Motor neuron (in vitro differentiated cells): ENCODE measurements at regions of chrX and their contacts with region 1.

Region 1: GRCh38 chrX:43836435-43837184 is 45.6 kb downstream of the MAOB start:
- ATAC-seq: no peak
- H3K4me3 ChIP-seq: no peak overlapping the region
- H3K27ac ChIP-seq: no peak overlapping the region
- H3K4me1 ChIP-seq: no peaks in the 10 kb centered on the region

Region 2: DNA sequence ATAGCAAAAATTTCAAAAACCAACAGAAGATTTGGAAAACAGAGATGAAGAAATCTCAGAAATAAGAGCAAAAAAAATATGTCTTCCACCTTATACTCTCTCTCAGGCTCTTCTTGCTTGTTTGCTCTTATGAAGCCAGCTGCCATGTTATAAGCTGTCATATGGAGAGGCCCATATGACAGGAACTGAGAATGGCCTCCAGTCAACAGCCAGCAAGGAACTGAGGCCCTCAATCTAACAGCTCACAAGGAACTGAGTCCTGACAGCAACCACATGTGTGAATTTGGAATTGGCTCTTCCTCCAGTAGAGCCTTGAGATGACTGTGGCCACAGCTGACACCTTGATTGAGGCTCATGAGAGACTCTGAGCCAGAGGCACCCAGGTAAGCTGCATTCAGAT is 231.9 kb before region 1 on chrX:
- in situ Hi-C with region 1: no loop called
- ATAC-seq: no peak
- H3K4me3 ChIP-seq: no peak overlapping the region
- H3K27ac ChIP-seq: no peak overlapping the region
- H3K4me1 ChIP-seq: no peaks in the 10 kb centered on the region

Region 3: DNA sequence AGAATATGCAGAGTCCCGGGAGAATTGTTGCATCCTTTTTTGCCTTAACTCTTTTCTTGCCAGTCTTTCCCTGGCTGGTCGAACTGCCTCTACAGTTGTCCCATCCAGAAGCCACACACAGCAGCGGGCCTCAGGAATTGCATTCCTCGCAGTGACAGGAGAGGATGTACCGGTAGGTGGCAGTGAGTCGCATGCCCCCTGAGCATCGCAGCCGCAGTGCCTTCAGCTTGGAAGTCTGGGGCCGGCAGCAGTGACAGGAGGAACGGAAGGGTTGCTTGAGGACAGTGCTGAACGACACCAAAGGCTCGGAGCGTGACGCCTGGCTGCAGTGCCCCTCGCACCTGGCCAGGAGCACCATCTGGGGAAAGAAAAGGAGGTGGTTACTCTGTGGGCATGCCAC is 113.1 kb after region 1 on chrX:
- in situ Hi-C with region 1: loop called in 1 of 9 experiments (anchors 25 kb)
- ATAC-seq: peak in 7 of 8 experiments; percentile 41 to 91 (median 89)
- H3K4me3 ChIP-seq: no peak overlapping the region
- H3K27ac ChIP-seq: no peak overlapping the region
- H3K4me1 ChIP-seq: no peaks in the 10 kb centered on the region